Thyroid gland (tissue), 4 donors: ENCODE measurements at regions of chr21 and their contacts with region 1.

Region 1: DNA sequence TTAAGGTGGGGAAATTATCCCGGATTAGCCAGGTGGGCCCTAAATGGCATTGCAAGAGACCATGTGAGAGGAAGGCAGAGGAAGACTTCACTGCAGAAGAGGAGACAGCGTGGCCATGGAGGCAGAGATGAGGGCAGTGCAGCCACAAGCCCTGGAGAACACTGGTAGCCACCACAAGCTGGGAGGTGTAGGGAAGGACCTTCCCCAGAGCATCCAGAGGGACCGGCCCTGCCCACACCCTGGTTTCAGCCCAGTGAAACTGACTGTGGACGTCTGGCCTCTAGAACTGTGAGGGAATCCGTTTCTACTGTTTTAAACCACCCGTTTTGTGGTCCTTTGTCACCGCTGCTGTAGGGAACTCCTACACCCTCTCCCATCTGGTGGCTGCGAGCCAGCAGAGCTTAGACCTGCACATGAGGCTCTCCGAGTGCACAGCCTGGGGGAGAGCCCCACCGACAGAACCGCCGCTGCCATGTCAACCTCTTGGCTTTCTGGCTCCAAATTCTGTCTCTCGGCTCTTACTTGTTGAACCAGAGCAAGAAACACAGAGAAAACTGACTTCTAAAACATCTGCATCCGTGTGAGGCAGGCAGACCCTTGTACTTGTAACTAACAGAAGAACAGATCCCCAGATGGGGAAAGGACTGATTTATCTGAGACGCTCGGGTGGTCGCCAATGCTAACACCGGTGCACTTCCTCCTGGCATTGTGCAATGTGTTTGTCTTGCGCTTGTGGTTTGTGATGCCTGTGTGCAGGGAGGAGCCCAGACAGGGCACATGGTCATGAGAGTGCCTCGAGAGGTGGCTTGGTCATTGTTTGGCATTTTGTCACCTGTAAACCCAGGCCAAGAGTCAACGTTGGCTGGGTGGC is 90.8 kb upstream of the TMPRSS2 start:
- DNase-seq: peak; percentile 82
- H3K4me3 ChIP-seq: no peak overlapping the region
- H3K27ac ChIP-seq: peak overlapping the region; percentile 68 to 84 (median 80)
- H3K4me1 ChIP-seq: peaks cover 41 to 50% of the 10 kb centered on the region in 2 donors
- H3K27me3 ChIP-seq: no peaks in the 10 kb centered on the region
- CTCF ChIP-seq: no peak
- POLR2A ChIP-seq: peak in 1 of 2 donors; percentile 32

Region 2: DNA sequence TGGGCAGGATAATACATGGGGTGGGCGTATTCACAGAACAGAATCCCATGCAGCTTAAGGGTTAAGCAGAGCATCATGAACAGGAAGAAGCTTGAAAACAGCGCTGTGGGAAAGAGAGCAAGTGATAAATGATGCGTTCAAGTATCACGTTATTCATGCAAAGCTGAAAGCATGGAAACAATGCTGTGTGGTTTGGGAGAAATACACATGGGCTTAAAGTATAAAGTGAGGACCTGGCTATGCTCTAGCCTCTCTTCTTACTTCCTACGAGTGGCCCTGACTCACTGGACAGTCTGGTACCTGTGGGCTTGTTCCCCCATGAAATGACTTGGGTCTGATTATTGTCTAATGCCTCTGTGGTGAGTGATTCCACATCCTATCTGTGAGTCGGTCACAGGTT is 116.5 kb before region 1 on chr21:
- intact Hi-C with region 1: loop called (anchors 10 kb)
- DNase-seq: no peak
- H3K4me3 ChIP-seq: no peak overlapping the region
- H3K27ac ChIP-seq: no peak overlapping the region
- H3K4me1 ChIP-seq: peaks cover 33 to 58% of the 10 kb centered on the region in 2 donors
- H3K27me3 ChIP-seq: no peaks in the 10 kb centered on the region
- CTCF ChIP-seq: no peak
- POLR2A ChIP-seq: no peak